PC-3 (cell line): ENCODE measurements at regions of chr3 and their contacts with region 1.

Region 1: DNA sequence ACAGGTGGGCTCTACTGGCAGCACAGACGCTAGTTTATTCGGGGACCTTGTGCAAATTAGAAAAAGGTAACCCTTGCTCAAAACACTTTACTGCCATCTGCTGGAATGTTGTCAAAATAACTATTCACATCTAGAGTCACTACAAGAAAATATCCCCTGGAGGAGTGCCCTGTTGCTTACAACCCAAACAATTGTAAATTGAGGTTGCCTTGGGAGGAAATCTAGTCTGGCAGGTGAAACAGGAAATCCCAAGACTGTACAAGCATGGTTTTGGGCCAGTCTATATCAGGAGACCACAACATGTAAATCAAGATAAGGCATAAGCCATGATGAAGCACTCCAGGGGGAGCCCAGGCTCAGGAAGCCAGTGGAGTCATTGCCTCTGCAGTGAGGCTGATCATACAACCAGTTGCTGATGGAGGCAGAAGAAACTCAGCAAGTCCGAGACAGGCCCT is 136.8 kb upstream of the ACP3 start:
- DNase-seq: peak; percentile 89
- ATAC-seq: peak; percentile 84
- H3K4me3 ChIP-seq: no peak overlapping the region
- H3K27ac ChIP-seq: no peak overlapping the region
- H3K4me1 ChIP-seq: 0 out of 2 replicates have a peak, but pooled peaks cover 5% of the 10 kb centered on the region
- H3K27me3 ChIP-seq: no peaks in the 10 kb centered on the region
- CTCF ChIP-seq: peak; percentile 72

Region 2: DNA sequence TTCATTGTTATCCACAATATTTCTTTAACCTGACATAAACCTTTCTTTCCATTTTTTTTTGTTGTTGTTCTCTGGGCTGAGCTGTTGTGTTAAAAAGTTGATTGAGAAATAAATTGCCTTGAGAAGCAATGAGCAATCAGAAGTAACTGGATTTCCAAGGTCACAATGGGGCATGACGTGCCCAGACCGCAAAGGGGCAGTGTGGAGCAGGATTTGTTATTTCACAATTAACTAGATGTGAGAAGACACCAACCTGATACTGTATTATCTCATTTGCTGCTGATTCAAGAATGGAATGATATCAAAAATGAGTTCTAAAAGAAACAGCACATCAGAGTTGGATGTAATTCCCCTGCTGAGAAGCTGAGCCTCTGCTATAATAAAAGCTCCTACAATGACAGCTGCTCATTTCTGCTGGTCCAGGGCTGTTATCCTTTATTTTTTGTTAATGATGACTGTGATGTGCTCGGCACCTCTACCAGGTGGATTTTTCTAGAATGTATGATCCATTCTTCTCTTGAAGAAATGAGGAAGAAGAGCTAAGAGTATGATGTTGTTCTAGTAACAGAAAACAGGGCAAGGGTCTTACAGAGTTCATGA is 173.7 kb before region 1 on chr3:
- CTCF ChIA-PET with region 1: no interaction called
- POLR2A ChIA-PET with region 1: no interaction called
- intact Hi-C with region 1: loop called (anchors 1 kb)
- DNase-seq: peak; percentile 59
- ATAC-seq: peak; percentile 50
- H3K4me3 ChIP-seq: no peak overlapping the region
- H3K27ac ChIP-seq: no peak overlapping the region
- H3K4me1 ChIP-seq: peaks cover 20% of the 10 kb centered on the region
- H3K27me3 ChIP-seq: no peaks in the 10 kb centered on the region
- CTCF ChIP-seq: peak; percentile 65

Region 3: GRCh38 chr3:132029182-132029902 is 151.0 kb before region 1 on chr3:
- CTCF ChIA-PET with region 1: no interaction called
- POLR2A ChIA-PET with region 1: no interaction called
- intact Hi-C with region 1: loop called (anchors 2 kb)
- DNase-seq: peak; percentile 94
- ATAC-seq: peak; percentile 98
- H3K4me3 ChIP-seq: peak overlapping the region; percentile 34
- H3K27ac ChIP-seq: peak overlapping the region; percentile 64
- H3K4me1 ChIP-seq: peaks cover 13% of the 10 kb centered on the region
- H3K27me3 ChIP-seq: no peaks in the 10 kb centered on the region
- CTCF ChIP-seq: peak; percentile 87

Region 4: DNA sequence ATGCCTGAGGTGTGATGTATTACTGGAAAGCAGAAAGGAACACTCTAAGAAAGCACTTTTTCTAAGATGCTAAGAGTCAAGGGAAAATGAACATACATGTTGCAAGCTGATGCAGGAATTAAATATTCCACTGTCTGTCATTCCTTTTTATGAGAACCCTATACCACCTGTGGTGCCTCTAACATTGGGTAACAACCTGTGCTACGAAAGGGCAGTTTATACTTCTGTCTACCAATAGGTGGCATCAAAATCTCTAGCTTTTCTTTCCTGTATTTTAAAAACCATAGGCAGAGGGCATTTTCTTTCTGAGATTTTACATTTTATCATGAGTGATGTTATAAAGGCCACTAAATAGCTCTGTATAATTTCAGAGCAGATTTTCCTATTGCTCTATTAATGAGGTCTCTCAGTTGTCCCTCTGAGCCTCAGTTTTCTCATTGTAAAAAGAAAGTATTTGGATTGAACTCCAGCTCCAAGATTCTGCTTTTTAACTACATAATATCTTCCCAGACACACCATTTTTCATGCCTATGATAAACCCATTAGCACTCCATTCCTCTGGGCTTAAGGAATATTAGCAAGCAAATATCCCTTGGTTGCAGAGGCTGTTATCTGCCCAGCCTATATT is 142.1 kb before region 1 on chr3:
- CTCF ChIA-PET with region 1: no interaction called
- POLR2A ChIA-PET with region 1: no interaction called
- intact Hi-C with region 1: loop called (anchors 1 kb)
- DNase-seq: peak; percentile 60
- ATAC-seq: peak; percentile 67
- H3K4me3 ChIP-seq: no peak overlapping the region
- H3K27ac ChIP-seq: no peak overlapping the region
- H3K4me1 ChIP-seq: no peaks in the 10 kb centered on the region
- H3K27me3 ChIP-seq: no peaks in the 10 kb centered on the region
- CTCF ChIP-seq: peak; percentile 75

Region 5: DNA sequence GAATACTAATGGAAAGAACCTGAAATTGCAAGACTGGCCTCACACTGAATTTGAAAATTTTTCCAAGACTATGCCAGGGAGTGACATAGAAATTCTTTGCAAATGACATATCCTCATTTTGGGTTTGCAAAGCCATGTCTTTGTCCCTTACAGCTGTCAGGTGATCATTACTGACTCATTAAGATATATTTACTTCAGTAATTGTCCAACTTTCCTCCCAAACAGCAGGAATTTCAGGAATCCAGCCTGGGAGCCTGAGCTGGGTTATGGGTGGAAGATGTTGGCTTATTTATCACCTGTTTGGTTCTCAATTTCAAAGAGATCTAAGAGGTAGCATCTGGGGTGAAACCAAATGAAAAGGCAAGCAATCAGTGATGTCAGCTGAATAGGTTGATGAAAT is 25.2 kb after region 1 on chr3:
- CTCF ChIA-PET with region 1: interaction called, 3 read pairs
- POLR2A ChIA-PET with region 1: no interaction called
- intact Hi-C with region 1: loop called (anchors 1 kb)
- DNase-seq: peak; percentile 49
- ATAC-seq: peak; percentile 15; the same call in 1 of the 2 replicates
- H3K4me3 ChIP-seq: no peak overlapping the region
- H3K27ac ChIP-seq: no peak overlapping the region
- H3K4me1 ChIP-seq: peaks cover 15% of the 10 kb centered on the region
- H3K27me3 ChIP-seq: no peaks in the 10 kb centered on the region
- CTCF ChIP-seq: no peak

Region 6: DNA sequence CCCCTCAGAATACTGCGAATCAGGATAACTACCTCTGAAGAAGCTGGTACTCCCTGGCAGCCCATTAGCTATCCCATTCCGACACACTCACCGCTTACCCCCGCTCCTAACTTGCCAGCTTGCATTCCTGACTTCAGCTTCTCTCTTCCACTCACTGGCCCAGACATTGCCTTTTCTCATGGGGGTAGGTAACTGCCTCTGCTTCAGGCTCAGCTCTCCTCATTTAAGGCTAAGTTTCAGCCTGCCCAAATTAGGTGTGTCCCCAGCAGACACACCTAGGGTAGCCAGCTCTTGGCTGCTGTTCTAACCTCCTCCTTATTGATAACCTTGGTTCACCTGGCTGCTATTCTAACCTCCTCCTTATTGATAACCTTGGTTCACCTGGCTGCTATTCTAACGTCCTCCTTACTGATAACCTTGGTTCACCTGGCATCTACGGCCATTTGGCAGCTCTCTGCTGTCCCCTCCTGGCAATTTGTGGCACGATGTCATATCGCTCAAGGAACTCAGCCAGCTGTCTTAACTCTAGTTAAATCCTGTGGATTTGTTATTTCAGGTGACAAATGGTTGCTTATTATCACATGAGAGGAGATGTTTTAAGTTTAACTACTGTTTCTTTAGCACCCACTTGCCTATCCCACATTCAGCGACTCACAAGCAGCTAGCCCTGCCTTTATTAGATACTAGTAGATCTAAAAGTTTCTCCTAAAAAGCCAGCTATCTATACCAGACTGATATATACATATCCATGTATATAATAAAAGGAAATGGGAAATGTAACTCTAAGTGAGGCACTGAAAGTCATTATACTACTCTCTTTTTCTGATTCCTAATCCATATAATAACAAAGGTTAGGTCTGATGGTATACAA is 30.3 kb after region 1 on chr3:
- CTCF ChIA-PET with region 1: interaction called, 3 read pairs
- POLR2A ChIA-PET with region 1: no interaction called
- intact Hi-C with region 1: loop called (anchors 1 kb)
- DNase-seq: peak; percentile 65
- ATAC-seq: peak; percentile 61
- H3K4me3 ChIP-seq: no peak overlapping the region
- H3K27ac ChIP-seq: no peak overlapping the region
- H3K4me1 ChIP-seq: peaks cover 6% of the 10 kb centered on the region
- H3K27me3 ChIP-seq: no peaks in the 10 kb centered on the region
- CTCF ChIP-seq: peak; percentile 84